ENCODE measurements at regions of chr1 and their contacts with region 1.

Region 1: DNA sequence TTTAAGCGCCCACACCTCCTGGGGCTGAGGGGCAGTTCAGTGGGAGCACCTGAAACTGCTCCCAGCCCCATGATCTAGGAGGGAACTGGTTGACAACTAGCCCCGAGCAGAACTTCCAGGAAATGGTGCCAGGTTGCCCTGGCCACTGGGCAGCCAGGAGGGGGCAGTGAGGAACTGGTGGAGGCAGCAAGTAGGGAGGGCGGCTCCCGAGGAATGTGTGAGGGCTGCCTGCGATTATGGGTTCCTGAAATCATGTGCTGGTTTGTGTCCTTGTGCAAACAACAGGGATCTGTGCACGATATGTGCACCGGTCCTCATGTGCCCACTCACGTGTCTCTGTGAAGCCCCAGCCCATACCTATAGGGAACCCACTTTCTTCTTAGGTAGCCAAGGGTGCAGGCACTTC is 9.9 kb downstream of the GPR3 start:
- DNase-seq: peak; percentile 89 to 92
- H3K4me3 ChIP-seq: no peak overlapping the region
- H3K27ac ChIP-seq: peak overlapping the region; percentile 69 to 79 (median 70)
- H3K4me1 ChIP-seq: peaks cover 20 to 49% of the 10 kb centered on the region in 2 donors
- H3K27me3 ChIP-seq: no peaks in the 10 kb centered on the region
- CTCF ChIP-seq: peak; percentile 38 to 91 (median 80)
- POLR2A ChIP-seq: peak in 1 of 2 donors; percentile 16

Region 2: GRCh38 chr1:27605796-27606707 is 203.7 kb after region 1 on chr1:
- intact Hi-C with region 1: loop called (anchors 5 kb)
- DNase-seq: peak; percentile 53 to 61
- H3K4me3 ChIP-seq: no peak overlapping the region
- H3K27ac ChIP-seq: no peak overlapping the region
- H3K4me1 ChIP-seq: peaks cover 22 to 24% of the 10 kb centered on the region in 2 donors
- H3K27me3 ChIP-seq: no peaks in the 10 kb centered on the region
- CTCF ChIP-seq: peak; percentile 72 to 96 (median 88)
- POLR2A ChIP-seq: no peak